ENCODE measurements at regions of chr18 and their contacts with region 1.

Region 1: DNA sequence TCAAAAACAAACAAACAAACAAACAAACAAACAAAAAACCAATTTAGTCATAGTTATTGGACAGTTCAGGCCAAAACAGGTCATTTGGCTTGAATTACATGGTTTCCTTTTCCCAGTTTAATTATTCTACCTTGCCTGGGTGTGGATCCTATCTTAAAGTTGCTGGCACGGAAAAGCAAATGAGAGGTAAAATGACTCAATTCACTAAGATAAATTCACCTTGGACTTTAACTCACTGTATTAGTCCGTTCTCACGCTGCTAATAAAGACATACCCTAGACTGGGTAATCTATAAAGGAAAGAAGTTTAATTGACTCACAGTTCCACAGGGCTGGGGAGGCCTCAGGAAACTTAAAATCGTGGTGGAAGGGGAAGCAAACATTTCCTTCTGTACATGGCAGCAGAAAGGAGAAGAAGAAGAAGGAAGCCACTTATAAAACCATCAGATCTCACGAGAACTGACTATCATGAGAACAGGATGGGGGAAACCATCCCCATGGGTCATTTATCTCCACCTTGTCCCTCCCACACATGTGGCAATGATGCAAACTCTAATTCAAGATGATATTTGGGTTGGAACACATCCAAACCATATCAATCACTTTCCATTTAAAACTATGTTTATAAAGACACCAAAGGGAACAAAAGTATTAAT is 22.5 kb upstream of the TRAPPC8 start:
- DNase-seq: no peak
- ATAC-seq: no peak
- H3K4me3 ChIP-seq: no peak overlapping the region
- H3K27ac ChIP-seq: no peak overlapping the region
- H3K4me1 ChIP-seq: no peaks in the 10 kb centered on the region
- H3K27me3 ChIP-seq: no peaks in the 10 kb centered on the region

Region 2: GRCh38 chr18:31563778-31564177 is 401.7 kb before region 1 on chr18:
- intact Hi-C with region 1: loop called in 1 of 2 experiments (anchors 10 kb)
- DNase-seq: no peak
- ATAC-seq: no peak
- H3K4me3 ChIP-seq: no peak overlapping the region
- H3K27ac ChIP-seq: no peak overlapping the region
- H3K4me1 ChIP-seq: no peaks in the 10 kb centered on the region
- H3K27me3 ChIP-seq: peaks cover 0 to 2% of the 10 kb centered on the region in 2 donors